Activated naive CD4-positive, alpha-beta T cell treated with anti-CD3 and anti-CD28 coated beads for 36 hours (primary cell): ENCODE measurements at regions of chr14 and their contacts with region 1.

Region 1: GRCh38 chr14:50342221-50343078 is 30.3 kb downstream of the DMAC2L start:
- DNase-seq: peak; percentile 79
- H3K4me3 Mint-ChIP-seq: no peak overlapping the region
- H3K27ac Mint-ChIP-seq: no peak overlapping the region
- H3K4me1 Mint-ChIP-seq: peaks cover 26% of the 10 kb centered on the region
- H3K27me3 Mint-ChIP-seq: no peaks in the 10 kb centered on the region

Region 2: DNA sequence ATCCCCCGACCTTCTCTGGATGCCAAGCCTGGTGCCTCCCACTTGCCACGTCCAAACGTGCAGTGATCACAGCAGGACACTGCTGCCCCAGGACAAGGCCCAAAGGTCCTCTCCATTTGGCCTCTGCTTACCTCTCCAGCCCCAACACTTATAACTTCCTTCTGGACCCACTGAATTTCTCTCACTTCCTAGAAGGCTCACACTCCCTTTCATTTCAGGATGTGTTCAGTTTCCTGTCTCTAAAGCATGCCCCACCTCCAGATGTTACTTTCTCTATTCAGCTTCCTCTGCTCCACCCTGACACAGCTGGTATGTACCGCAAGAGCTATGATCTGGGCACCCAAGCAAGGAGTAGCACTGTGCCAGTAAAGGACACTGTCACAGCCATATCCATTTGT is 21.3 kb after region 1 on chr14:
- CTCF ChIA-PET with region 1: interaction called, 6 read pairs
- intact Hi-C with region 1: loop called (anchors 1 kb)
- DNase-seq: peak; percentile 74
- H3K4me3 Mint-ChIP-seq: peak overlapping the region; percentile 73
- H3K27ac Mint-ChIP-seq: peak overlapping the region; percentile 84
- H3K4me1 Mint-ChIP-seq: peaks cover 18% of the 10 kb centered on the region
- H3K27me3 Mint-ChIP-seq: no peaks in the 10 kb centered on the region

Region 3: GRCh38 chr14:50452979-50453705 is 110.7 kb after region 1 on chr14:
- CTCF ChIA-PET with region 1: no interaction called
- intact Hi-C with region 1: loop called (anchors 2 kb)
- DNase-seq: no peak
- H3K4me3 Mint-ChIP-seq: no peak overlapping the region
- H3K27ac Mint-ChIP-seq: no peak overlapping the region
- H3K4me1 Mint-ChIP-seq: peaks cover 12% of the 10 kb centered on the region
- H3K27me3 Mint-ChIP-seq: no peaks in the 10 kb centered on the region

Region 4: DNA sequence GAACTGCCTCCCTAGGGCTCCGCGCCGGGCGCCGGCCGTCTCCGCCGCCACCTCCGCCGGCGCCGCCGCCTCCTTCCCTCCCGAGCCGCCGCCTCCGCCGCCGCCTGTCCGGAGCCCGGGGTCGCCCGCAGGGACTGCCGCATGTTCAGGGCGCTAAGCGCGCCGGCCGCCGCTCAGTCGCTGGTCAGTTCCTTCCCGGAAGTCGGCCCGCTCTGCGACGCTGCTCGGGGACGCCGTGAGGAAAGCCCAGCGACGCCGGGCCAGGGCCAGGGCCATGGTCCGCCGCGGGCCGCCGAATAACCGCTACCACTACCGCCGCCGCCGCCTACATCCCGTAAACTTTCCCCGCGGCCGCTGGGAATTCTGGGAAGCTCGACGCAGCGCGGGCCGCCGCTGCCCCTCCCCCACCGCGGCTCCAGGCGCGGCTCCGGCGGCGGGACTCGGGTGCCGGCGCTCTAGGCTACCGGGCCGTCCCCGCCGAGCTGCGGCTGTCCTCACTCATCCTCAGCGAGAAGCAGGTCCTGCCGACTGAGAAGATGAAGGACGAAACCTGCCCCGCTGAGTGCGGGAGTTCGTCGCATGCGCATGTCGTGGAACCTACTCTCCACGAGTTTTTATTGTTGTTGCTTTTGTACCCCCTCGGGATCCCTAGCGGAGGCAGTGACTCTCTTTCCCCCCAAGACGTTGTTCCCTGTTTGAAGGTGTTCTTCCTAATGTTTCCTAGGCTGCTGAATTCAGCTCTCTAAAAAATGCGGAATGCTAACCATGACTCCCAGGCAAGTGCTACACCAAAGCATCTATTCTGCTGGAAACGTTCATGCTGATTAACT is 325.8 kb after region 1 on chr14 and contains the start of gene SAV1:
- CTCF ChIA-PET with region 1: no interaction called
- intact Hi-C with region 1: loop called (anchors 1 kb)
- DNase-seq: peak; percentile 65
- H3K4me3 Mint-ChIP-seq: no peak within 1 kb of the TSS
- H3K27ac Mint-ChIP-seq: peak within 1 kb of the TSS; percentile 56
- H3K4me1 Mint-ChIP-seq: peaks cover 14% of the 10 kb centered on the region
- H3K27me3 Mint-ChIP-seq: no peaks in the 10 kb centered on the region
- total RNA-seq, gene SAV1: 12.7 to 13.5 TPM

Region 5: GRCh38 chr14:50762001-50762930 is 419.8 kb after region 1 on chr14:
- CTCF ChIA-PET with region 1: interaction called, 8 read pairs
- intact Hi-C with region 1: loop called (anchors 1 kb)
- DNase-seq: peak; percentile 74
- H3K4me3 Mint-ChIP-seq: no peak overlapping the region
- H3K27ac Mint-ChIP-seq: no peak overlapping the region
- H3K4me1 Mint-ChIP-seq: peaks cover 28% of the 10 kb centered on the region
- H3K27me3 Mint-ChIP-seq: no peaks in the 10 kb centered on the region

Region 6: GRCh38 chr14:50875359-50876070 is 533.1 kb after region 1 on chr14:
- CTCF ChIA-PET with region 1: no interaction called
- intact Hi-C with region 1: loop called (anchors 5 kb)
- DNase-seq: peak; percentile 89
- H3K4me3 Mint-ChIP-seq: no peak overlapping the region
- H3K27ac Mint-ChIP-seq: no peak overlapping the region
- H3K4me1 Mint-ChIP-seq: peaks cover 26% of the 10 kb centered on the region
- H3K27me3 Mint-ChIP-seq: peaks cover 51% of the 10 kb centered on the region